ENCODE measurements at regions of chr1 and their contacts with region 1.

Region 1: DNA sequence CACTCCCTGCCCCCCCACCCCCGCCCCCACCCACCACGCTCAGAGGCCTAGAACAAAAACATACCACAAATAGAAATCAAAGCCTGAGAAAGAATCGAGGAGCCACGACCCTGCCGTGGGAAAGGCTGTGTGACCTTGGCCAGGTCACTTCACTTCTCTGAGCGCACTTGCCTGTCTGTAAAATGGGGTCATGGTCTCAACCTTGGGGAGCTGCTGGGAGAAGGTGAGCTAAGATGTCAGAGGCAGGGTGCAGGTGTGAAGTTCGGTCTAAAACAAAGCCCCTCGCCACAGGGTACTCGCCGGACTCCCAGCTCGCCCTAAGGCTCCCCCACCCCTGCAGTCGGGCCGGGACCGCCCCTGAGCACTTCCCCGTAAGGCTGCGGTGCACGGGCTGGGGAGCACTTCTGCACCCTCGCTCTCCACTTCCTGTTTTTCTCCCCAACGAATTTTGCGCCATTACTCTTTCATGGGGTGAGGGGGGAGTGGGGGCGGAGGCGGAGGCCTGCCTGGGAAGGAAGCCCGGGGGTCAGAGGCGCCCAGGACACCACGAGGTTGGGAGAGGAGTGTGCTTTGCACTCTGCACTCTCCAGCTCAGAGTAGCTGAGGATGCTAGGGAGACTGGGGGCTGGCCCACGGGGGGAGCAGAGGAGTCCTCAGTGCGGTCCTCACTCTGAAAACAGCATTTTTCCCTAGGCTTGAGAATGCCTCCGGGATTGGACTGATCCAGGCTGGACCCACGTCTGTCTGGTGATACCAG is 21.9 kb upstream of the PIK3CD start:
- DNase-seq: no peak
- ATAC-seq: no peak
- H3K4me3 ChIP-seq: no peak overlapping the region
- H3K27ac ChIP-seq: no peak overlapping the region
- H3K4me1 ChIP-seq: peaks cover 0 to 17% of the 10 kb centered on the region in 2 experiments; a peak in 2 of 4 replicates
- H3K27me3 ChIP-seq: no peaks in the 10 kb centered on the region
- CTCF ChIP-seq: no peak
- POLR2A ChIP-seq: no peak
- RAD21 ChIP-seq: no peak

Region 2: DNA sequence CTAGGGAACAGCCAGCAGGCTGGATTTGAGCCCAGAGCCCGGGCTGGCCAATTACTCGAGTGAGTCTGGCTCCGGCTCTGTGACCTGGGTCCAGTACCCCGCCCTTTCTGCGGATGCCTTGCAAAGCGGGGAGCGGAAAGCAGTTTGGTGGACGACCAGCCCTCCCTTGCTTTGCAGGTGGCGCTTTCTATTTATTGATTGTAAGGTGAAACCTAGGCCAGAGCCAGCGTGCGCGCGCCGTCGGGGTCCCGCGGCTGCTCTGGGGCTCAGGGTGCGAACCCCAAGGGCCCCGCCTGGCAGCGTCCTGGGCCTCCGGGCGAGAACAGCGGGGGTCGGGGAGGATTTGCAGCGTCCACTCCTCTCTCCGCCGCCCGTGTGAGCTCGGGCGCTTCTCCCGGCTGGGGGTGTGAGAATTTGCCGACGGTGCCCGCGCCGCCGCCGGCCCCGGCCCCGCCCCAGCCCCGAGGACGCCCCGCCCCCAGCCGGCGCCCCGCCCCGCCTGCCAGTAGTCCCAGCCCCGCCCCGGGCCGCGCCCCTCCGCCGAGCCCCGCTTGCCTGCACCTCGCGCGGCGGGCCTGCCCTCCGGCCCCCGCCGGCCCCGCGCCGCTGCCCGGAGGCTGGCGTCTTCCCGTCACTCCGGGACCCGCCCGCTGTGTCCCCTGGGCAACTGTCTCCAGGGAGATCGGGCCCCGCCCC is 59.5 kb after region 1 on chr1:
- CTCF ChIA-PET with region 1: no interaction called
- POLR2A ChIA-PET with region 1: no interaction called
- RAD21 ChIA-PET with region 1: no interaction called
- intact Hi-C with region 1: loop called (anchors 5 kb)
- DNase-seq: peak; percentile 54
- ATAC-seq: peak; percentile 82
- H3K4me3 ChIP-seq: peak overlapping the region; percentile 68 to 86
- H3K27ac ChIP-seq: peak overlapping the region; percentile 52; the same call in 1 of the 2 replicates
- H3K4me1 ChIP-seq: peaks cover 27 to 48% of the 10 kb centered on the region in 2 experiments
- H3K27me3 ChIP-seq: no peaks in the 10 kb centered on the region
- CTCF ChIP-seq: no peak
- POLR2A ChIP-seq: no peak
- RAD21 ChIP-seq: no peak

Region 3: DNA sequence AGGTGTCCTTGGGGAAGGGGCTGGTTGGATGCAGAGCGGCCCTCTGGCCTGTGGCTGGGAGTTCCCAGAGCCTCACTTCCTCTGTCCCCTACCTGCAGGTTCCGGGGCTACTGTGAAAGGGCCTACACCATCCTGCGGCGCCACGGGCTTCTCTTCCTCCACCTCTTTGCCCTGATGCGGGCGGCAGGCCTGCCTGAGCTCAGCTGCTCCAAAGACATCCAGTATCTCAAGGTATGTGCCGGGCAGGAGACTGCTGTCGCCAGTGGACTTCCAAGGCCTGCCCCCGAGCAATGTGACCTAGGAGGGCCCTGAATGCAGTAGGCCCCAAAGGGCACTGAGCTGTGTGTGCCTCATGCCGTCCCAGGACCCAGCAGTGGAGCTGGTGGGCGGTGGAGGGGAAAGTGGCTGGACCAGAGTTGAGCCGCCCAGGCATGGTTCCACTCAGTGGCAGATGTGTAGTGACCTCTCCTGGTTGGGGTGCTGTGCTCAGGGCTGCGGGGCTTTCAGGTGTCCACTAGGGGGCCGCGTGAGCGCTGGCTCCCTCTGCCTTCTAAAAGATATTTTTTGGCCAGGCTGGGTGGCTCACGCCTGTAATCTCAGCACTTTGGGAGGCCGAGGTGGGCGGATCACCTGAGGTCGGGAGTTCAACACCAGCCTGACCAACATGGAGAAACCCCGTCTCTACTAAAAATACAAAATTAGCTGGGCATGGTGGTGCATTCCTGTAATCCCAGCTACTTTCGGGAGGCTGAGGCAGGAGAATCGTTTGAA is 95.3 kb after region 1 on chr1:
- CTCF ChIA-PET with region 1: interaction called, 8 read pairs
- POLR2A ChIA-PET with region 1: no interaction called
- RAD21 ChIA-PET with region 1: no interaction called
- intact Hi-C with region 1: loop called (anchors 1 kb)
- DNase-seq: peak; percentile 33
- ATAC-seq: peak; percentile 91
- H3K4me3 ChIP-seq: no peak overlapping the region
- H3K27ac ChIP-seq: 0 out of 2 replicates have a peak overlapping the region, but pooled peaks have one; percentile 5
- H3K4me1 ChIP-seq: peaks cover 0 to 6% of the 10 kb centered on the region in 2 experiments; a peak in 1 of 4 replicates
- H3K27me3 ChIP-seq: no peaks in the 10 kb centered on the region
- CTCF ChIP-seq: peak; percentile 84 to 99 (median 98)
- POLR2A ChIP-seq: no peak
- RAD21 ChIP-seq: peak; percentile 87

Region 4: DNA sequence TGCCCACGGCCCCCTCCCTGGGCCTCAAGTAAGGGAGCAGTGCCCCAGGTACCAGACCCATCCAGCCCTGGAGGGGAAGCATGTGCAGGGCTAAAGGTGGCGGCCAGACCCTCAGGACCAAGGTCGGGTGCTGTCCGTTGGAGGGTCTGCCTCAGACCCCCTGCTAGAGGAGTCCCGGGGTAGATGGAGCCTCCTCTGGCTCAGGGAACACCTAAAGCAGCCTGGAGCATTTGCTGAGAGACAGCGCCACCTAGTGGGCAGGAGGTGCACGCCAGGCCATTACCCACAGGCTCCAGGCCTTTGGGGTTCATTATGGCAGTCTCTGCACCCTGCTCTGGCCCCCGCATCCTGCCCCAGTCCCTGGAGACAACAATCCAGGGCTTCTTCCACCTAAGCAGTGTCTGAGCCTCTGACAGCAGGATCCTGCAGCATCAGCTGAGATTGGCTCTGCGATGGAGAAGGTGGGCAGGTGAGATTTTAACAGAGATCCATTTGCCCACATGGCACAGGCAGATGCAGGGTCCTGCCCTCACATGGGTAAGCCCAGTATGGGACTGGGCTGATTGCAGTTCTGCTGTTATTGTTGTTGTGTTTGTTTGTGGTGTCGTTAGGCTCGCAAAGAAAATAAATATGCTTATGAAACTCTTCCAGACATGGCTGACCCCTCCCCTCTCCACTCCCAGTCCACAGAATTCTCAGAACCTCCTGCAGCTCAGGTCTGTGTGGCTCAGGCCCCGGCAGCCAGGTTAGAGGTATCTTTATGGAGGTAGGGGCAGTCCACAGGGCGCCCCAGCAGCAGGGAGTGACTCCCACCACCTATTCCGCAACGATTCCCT is 238.0 kb after region 1 on chr1:
- CTCF ChIA-PET with region 1: interaction called, 8 read pairs
- POLR2A ChIA-PET with region 1: no interaction called
- RAD21 ChIA-PET with region 1: no interaction called
- intact Hi-C with region 1: loop called (anchors 2 kb)
- DNase-seq: no peak
- ATAC-seq: peak; percentile 97
- H3K4me3 ChIP-seq: no peak overlapping the region
- H3K27ac ChIP-seq: no peak overlapping the region
- H3K4me1 ChIP-seq: peaks cover 0 to under 1% of the 10 kb centered on the region in 2 experiments; a peak in 1 of 4 replicates
- H3K27me3 ChIP-seq: no peaks in the 10 kb centered on the region
- CTCF ChIP-seq: peak; percentile 97 to 98 (median 97)
- POLR2A ChIP-seq: no peak
- RAD21 ChIP-seq: peak; percentile 99

Region 5: DNA sequence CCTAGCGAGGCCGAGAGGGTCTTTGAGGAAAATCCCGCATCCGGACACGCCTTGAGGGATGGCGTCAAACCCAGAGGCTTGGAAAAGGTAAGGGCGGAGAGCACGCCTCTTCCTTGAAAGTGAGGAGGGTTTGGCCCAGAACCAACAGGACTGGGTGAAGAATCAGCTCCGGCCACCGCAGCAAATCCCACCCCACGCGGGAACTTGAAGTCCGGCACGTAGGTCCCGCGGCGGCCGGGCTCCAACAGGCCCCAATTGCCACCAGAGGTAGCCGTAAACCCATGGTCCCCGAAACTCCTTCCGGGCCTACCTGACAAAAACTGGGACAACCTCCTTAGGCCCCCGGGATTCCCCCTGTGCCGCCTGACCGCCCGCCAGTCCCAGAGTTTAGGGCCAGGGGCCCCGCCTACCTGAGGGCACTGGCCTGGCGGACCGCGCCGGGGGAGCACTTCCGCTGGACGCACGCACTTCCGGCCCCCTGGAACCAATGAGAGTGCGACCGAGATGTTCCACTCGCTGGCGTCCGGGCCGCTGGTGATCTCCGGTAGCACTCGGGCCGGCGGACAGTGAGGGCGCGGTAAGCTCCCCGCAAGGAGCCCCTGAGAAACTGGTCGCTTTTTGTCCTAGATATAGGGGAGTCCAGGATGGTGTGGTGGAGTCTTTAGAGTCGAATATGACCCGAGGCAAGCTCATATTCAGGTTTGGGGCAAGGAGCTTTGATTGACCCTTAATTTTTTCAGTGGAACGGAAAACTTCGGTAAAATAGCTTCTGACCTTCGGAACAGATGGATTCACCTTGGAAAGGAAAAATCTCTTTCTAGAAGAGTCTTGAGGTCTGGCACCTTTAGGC is 313.5 kb after region 1 on chr1 and contains the starts of genes LZIC and NMNAT1:
- CTCF ChIA-PET with region 1: no interaction called
- POLR2A ChIA-PET with region 1: no interaction called
- RAD21 ChIA-PET with region 1: no interaction called
- intact Hi-C with region 1: loop called (anchors 2 kb)
- DNase-seq: peak; percentile 88
- ATAC-seq: peak; percentile 93
- H3K4me3 ChIP-seq: peak within 1 kb of the TSS; percentile 84 to 90
- H3K27ac ChIP-seq: peak within 1 kb of the TSS; percentile 83
- H3K4me1 ChIP-seq: peaks cover 4 to 6% of the 10 kb centered on the region in 2 experiments; a peak in 2 of 4 replicates
- H3K27me3 ChIP-seq: no peaks in the 10 kb centered on the region
- CTCF ChIP-seq: no peak
- POLR2A ChIP-seq: peak; percentile 88
- RAD21 ChIP-seq: no peak; the same call in 1 of the 2 replicates
- total RNA-seq, gene LZIC: 26.6 TPM
- total RNA-seq, gene NMNAT1: 8.6 TPM

Region 6: DNA sequence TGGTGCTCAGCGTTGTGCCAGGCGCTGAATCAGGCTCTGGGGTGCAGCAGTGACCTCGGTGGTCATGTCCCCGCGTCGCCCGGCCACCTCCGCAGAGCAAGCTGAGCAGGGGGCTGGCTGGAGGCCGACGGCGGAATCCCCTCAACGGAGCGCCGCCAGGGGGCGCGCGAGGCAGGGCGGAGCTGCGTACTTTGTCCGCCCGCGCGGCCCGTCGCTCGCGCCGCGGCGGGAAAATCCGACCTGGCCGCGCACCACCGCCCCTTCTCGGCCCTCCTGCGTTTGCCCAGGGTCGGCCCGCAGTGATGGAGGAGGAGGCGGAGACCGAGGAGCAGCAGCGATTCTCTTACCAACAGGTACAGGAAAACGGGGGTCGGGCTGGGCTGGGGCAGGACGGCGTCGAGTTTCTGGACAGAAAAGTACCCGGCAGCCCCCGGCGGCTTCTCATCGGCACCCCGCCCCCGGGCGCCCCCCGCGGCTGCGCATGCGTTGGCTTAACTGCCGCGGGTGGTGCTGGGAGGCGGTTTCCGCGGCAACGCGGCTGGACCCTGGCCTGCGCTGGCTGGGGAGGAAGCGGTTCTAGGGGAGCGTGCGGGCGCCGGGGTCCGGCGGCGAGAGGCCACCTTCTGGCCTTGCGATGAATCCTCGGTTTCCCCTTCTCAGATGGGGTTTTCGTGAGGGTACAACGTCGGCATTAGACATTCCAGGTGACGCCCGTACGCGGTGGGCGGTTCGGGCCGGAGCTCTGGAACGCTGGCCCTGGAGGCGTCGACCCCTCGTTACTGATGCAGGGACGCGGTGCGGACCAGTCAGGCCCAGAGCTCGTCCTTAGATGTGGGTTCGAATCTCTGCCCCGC is 800.8 kb after region 1 on chr1 and contains the start of gene CENPS:
- CTCF ChIA-PET with region 1: no interaction called
- POLR2A ChIA-PET with region 1: no interaction called
- RAD21 ChIA-PET with region 1: no interaction called
- intact Hi-C with region 1: loop called (anchors 5 kb)
- DNase-seq: peak; percentile 68
- ATAC-seq: peak; percentile 86
- H3K4me3 ChIP-seq: peak within 1 kb of the TSS; percentile 67 to 90
- H3K27ac ChIP-seq: peak within 1 kb of the TSS; percentile 66
- H3K4me1 ChIP-seq: peaks cover 2 to 19% of the 10 kb centered on the region in 2 experiments; a peak in 3 of 4 replicates
- H3K27me3 ChIP-seq: no peaks in the 10 kb centered on the region
- CTCF ChIP-seq: peak; percentile 76 to 86 (median 84)
- POLR2A ChIP-seq: peak; percentile 70
- RAD21 ChIP-seq: peak; percentile 76
- total RNA-seq, gene CENPS: 21.9 TPM

Measured in HCT116 (cell line).